OCI-LY7 (cell line): ENCODE measurements at regions of chr6 and their contacts with region 1.

Region 1: DNA sequence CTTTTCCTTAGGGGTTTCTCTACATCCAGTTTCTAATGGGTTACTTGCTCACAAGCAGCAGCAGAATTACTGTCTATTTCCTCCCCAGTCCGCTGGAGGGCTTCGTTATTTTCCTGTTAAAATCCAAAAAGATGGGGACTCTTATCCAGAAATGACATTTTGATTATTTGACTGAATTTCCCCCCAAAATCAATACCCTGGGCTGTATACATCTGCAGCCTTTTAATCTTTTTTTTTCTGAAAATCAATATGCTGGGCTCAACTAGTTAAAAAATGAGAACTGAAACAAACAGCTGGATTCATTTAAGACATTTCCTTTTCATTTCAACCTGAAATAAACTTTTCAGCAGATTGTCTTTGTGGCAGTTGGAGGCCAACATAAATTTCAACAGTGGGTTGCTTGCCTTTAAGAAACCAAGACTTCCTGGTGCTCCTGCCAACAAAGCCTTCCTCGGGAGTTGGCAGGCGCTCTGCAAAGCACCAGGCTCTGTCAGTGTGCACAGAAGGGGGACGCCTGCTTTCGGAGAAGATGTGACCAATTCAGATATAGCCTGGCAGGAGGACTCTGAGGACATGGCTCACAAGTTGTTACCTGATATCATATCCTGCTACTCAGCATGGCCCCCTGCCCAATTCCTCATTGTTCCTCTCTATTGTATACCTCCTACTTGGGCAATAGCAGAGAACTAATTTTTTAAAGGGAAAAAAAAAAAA is 204.7 kb upstream of the ARG1 start:
- DNase-seq: peak; percentile 94
- H3K4me3 ChIP-seq: peak overlapping the region; percentile 45
- H3K27ac ChIP-seq: peak overlapping the region; percentile 97
- H3K4me1 ChIP-seq: peaks cover 73% of the 10 kb centered on the region
- CTCF ChIP-seq: peak; percentile 37; the same call in 1 of the 2 replicates

Region 2: GRCh38 chr6:129621247-129621646 is 1747.1 kb before region 1 on chr6:
- CTCF ChIA-PET with region 1: no interaction called
- POLR2A ChIA-PET with region 1: no interaction called
- intact Hi-C with region 1: no loop called
- DNase-seq: peak; percentile 16
- H3K4me3 ChIP-seq: no peak overlapping the region
- H3K27ac ChIP-seq: no peak overlapping the region
- H3K4me1 ChIP-seq: no peaks in the 10 kb centered on the region
- CTCF ChIP-seq: peak; percentile 68

Region 3: GRCh38 chr6:131379948-131380347 is 11.6 kb after region 1 on chr6:
- CTCF ChIA-PET with region 1: interaction called, 5 read pairs
- POLR2A ChIA-PET with region 1: interaction called, 6 read pairs
- intact Hi-C with region 1: loop called (anchors 1 kb)
- DNase-seq: no peak
- H3K4me3 ChIP-seq: no peak overlapping the region
- H3K27ac ChIP-seq: no peak overlapping the region
- H3K4me1 ChIP-seq: peaks cover 55% of the 10 kb centered on the region
- CTCF ChIP-seq: no peak

Region 4: DNA sequence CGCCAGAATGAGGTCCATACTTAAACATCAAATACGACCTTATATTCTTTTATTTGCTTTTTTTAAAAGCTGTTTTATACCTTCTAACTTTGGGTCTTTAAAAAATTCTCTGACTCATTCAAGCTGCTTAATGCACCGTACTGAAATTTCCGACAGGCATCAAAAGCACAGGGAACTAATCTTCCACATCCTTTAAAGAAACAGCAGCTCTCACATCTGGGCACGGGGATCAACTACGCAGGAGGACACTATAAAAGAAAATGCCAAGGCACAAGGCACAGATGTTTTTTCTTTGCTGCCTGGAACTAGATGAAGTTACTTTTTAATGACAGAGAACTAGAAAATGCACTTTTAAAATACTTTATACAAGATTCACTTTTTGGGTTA is 92.3 kb after region 1 on chr6:
- CTCF ChIA-PET with region 1: no interaction called
- POLR2A ChIA-PET with region 1: no interaction called
- intact Hi-C with region 1: loop called (anchors 2 kb)
- DNase-seq: no peak
- H3K4me3 ChIP-seq: no peak overlapping the region
- H3K27ac ChIP-seq: no peak overlapping the region
- H3K4me1 ChIP-seq: peaks cover 21% of the 10 kb centered on the region
- CTCF ChIP-seq: no peak

Region 5: GRCh38 chr6:131532580-131533039 is 164.3 kb after region 1 on chr6:
- CTCF ChIA-PET with region 1: no interaction called
- POLR2A ChIA-PET with region 1: no interaction called
- intact Hi-C with region 1: loop called (anchors 5 kb)
- DNase-seq: no peak
- H3K4me3 ChIP-seq: no peak overlapping the region
- H3K27ac ChIP-seq: no peak overlapping the region
- H3K4me1 ChIP-seq: peaks cover 12% of the 10 kb centered on the region
- CTCF ChIP-seq: no peak

Region 6: DNA sequence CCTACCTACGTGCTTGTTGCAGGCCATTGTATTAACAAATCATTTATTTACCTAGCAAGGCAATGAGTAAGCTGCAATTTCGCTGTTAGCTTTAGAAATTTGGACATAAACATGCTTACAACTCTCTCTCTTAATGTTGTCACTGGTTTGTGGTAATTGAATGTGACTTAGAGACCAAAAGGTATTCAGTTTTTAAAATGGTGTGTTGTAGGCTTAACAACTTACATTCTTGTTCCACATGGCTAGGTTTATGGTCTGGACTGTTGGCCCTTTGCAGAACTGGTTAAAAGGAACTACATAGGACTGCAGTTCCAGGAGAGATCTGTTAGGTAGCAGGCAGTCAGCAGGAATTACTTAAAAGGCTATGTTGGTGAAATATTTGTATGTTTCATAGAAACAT is 352.8 kb after region 1 on chr6:
- CTCF ChIA-PET with region 1: no interaction called
- POLR2A ChIA-PET with region 1: no interaction called
- intact Hi-C with region 1: no loop called
- DNase-seq: no peak
- H3K4me3 ChIP-seq: no peak overlapping the region
- H3K27ac ChIP-seq: no peak overlapping the region
- H3K4me1 ChIP-seq: no peaks in the 10 kb centered on the region
- CTCF ChIP-seq: no peak